Breast epithelium (tissue), 4 donors: ENCODE measurements at regions of chr13 and their contacts with region 1.

Region 1: GRCh38 chr13:26601669-26602068 is 44.2 kb downstream of the WASF3 start:
- DNase-seq: no peak
- H3K4me3 ChIP-seq: no peak overlapping the region
- H3K27ac ChIP-seq: no peak overlapping the region
- H3K4me1 ChIP-seq: no peaks in the 10 kb centered on the region
- H3K27me3 ChIP-seq: no peaks in the 10 kb centered on the region
- CTCF ChIP-seq: no peak
- POLR2A ChIP-seq: no peak

Region 2: GRCh38 chr13:26589754-26590153 is 11.9 kb before region 1 on chr13:
- intact Hi-C with region 1: no loop called
- DNase-seq: no peak
- H3K4me3 ChIP-seq: no peak overlapping the region
- H3K27ac ChIP-seq: no peak overlapping the region
- H3K4me1 ChIP-seq: no peaks in the 10 kb centered on the region
- H3K27me3 ChIP-seq: no peaks in the 10 kb centered on the region
- CTCF ChIP-seq: no peak
- POLR2A ChIP-seq: no peak

Region 3: DNA sequence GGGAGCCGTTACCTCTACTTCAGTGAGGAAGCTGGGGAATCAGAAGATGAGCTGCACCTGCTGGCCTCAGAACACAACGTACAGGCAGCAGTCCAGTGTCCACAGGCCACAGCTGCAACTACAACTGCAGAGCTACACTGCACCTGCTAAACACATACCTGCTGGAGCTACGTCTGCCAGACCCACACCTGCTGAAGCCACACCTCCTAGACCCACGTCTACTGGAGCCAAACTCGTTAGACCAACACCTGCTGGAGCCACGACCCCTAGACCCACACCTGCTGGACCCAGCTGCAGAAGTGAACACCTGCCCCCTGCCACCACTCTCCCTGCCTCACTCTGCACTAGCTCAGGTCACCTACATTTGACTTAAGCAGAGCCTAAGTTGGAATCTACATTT is 400.0 kb after region 1 on chr13:
- intact Hi-C with region 1: loop called (anchors 5 kb)
- DNase-seq: peak in 1 of 2 donors; percentile 12
- H3K4me3 ChIP-seq: no peak overlapping the region
- H3K27ac ChIP-seq: no peak overlapping the region
- H3K4me1 ChIP-seq: no peaks in the 10 kb centered on the region
- H3K27me3 ChIP-seq: peaks cover 0 to 18% of the 10 kb centered on the region in 2 donors
- CTCF ChIP-seq: no peak
- POLR2A ChIP-seq: no peak